ENCODE measurements at regions of chr15 and their contacts with region 1.

Region 1: DNA sequence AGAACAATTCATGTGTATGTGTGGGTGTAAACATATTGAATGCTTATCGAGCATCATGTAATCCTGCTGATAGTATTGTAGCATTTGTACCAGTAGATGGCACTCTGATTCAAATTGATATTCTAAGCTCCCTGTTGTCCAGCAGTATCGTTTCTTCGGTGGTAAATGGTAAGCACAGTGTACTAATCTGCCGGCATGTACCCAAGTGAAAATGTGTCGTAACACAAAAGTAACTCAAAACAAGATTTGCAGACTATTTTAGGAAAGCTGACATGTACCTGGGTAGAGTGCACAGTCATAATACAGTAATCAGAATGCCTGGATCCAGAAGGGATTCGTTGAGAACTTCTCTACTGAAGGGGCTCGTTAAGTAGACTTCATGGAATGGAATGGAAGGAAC is 31.7 kb upstream of the MNS1 start:
- DNase-seq: peak; percentile 60
- ATAC-seq: peak; percentile 90
- H3K4me3 ChIP-seq: peak overlapping the region in 2 of 3 experiments; percentile 8 to 20; a peak in 1 of 6 replicates
- H3K27ac ChIP-seq: no peak overlapping the region
- H3K4me1 ChIP-seq: peaks cover 5% of the 10 kb centered on the region
- H3K27me3 ChIP-seq: no peaks in the 10 kb centered on the region
- CTCF ChIP-seq: peak; percentile 84
- EP300 ChIP-seq: no peak
- POLR2A ChIP-seq: no peak
- RAD21 ChIP-seq: peak; percentile 56; the same call in 1 of the 2 replicates

Region 2: DNA sequence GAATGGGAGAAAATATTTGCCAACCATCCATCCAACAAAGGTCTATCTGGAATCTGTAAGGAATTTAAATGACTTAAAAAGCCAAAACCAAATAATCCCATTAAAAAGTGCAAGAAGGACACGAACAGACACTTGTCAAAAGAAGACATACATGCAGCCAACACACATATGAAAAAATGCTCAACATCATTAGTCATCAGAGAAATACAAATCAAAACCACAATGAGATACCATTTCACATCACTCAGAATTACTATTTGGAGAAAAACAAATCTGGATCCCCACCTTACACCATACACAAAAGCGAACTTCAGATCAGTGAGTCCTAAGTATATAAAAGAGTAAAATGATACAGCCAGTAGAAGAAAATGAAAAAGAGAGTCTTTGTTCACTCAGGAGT is 26.9 kb after region 1 on chr15:
- CTCF ChIA-PET with region 1: no interaction called
- POLR2A ChIA-PET with region 1: no interaction called
- in situ Hi-C with region 1: no loop called
- intact Hi-C with region 1: no loop called
- DNase-seq: no peak
- ATAC-seq: no peak
- H3K4me3 ChIP-seq: no peak overlapping the region
- H3K27ac ChIP-seq: no peak overlapping the region
- H3K4me1 ChIP-seq: no peaks in the 10 kb centered on the region
- H3K27me3 ChIP-seq: peaks cover 0 to 3% of the 10 kb centered on the region in 2 experiments; a peak in 2 of 5 replicates
- CTCF ChIP-seq: no peak
- EP300 ChIP-seq: no peak
- POLR2A ChIP-seq: no peak
- RAD21 ChIP-seq: no peak

Region 3: GRCh38 chr15:56693761-56694160 is 197.1 kb after region 1 on chr15:
- CTCF ChIA-PET with region 1: no interaction called
- POLR2A ChIA-PET with region 1: no interaction called
- in situ Hi-C with region 1: no loop called
- intact Hi-C with region 1: no loop called
- DNase-seq: no peak
- ATAC-seq: no peak
- H3K4me3 ChIP-seq: no peak overlapping the region
- H3K27ac ChIP-seq: no peak overlapping the region
- H3K4me1 ChIP-seq: no peaks in the 10 kb centered on the region
- H3K27me3 ChIP-seq: no peaks in the 10 kb centered on the region
- CTCF ChIP-seq: no peak
- EP300 ChIP-seq: no peak
- POLR2A ChIP-seq: no peak
- RAD21 ChIP-seq: no peak

Region 4: DNA sequence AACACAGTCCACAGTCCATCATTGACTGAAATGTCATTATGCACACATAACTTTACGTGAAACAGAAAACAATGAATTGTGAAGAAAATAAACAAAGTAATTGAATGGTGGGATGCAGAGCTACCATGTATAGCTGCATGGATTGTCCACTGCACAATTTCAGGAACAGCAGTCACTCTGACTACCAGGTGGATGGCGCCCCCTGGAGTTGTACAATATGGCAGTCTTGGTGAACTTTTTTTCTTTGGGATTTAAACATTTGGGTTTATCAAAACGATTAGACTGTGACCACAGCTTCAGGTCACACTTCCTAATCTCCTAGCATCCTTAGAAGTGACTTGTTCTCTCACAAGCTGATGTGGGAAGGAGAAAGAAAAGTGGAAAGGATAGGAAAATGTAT is 372.9 kb after region 1 on chr15:
- CTCF ChIA-PET with region 1: no interaction called
- POLR2A ChIA-PET with region 1: no interaction called
- in situ Hi-C with region 1: loop called (anchors 10 kb)
- intact Hi-C with region 1: loop called (anchors 5 kb)
- DNase-seq: no peak
- ATAC-seq: no peak
- H3K4me3 ChIP-seq: no peak overlapping the region
- H3K27ac ChIP-seq: no peak overlapping the region
- H3K4me1 ChIP-seq: no peaks in the 10 kb centered on the region; the same call in 1 of the 2 replicates
- H3K27me3 ChIP-seq: no peaks in the 10 kb centered on the region
- CTCF ChIP-seq: peak; percentile 59
- EP300 ChIP-seq: no peak
- POLR2A ChIP-seq: no peak
- RAD21 ChIP-seq: 0 out of 2 replicates have a peak, but pooled peaks have one; percentile 19

Measured in HepG2 (cell line).